ENCODE measurements at regions of chr14 and their contacts with region 1.

Region 1: DNA sequence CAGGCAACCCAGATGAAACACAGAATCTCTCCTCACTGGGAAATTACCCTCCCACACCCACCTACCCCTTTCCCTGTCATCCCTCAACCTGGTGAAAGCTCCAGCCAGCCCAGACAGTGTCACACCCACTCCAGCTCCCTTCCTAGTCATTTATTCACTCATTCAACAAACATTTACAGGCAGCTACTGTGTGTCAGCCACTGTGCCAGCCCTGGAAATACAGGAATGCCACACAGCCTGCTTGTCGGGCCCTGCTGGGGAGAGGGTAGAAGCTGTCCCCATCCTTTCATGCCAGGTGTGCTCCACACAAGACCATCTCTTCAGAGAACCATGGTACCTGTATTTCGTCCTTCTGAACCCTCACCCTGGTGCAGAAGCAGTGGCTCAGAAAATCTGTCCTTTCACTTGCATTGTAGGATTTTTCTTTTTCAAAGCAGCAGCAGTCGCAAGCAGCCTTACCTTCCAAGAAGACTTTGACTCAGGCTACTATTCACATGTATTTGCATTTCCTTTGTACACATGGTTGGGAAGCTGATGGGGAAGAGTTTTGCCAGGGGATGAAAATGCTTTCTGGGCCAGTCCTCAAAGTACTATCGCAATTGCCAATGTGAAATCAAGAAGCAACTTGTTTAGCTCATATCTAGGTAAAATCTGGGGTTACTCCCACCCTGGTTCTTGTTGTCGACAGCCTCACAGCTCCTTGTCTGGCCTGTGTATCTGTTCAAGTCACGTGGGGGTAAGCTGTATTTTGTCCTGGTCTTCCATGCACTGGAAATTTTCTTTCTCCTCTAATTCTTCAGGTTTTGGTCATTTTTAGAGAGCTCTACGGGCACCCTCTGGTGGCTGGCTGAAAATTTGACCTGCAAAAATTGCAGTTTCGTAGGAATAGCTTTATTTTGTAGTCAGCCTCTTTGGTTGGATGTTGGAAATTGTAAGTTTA is 147.4 kb upstream of the EGLN3 start:
- DNase-seq: peak; percentile 36
- ATAC-seq: peak; percentile 59
- H3K4me3 ChIP-seq: no peak overlapping the region
- H3K27ac ChIP-seq: no peak overlapping the region
- H3K4me1 ChIP-seq: no peaks in the 10 kb centered on the region
- H3K27me3 ChIP-seq: no peaks in the 10 kb centered on the region
- CTCF ChIP-seq: peak; percentile 57 to 74 (median 63); a peak in 5 of 6 replicates
- EP300 ChIP-seq: no peak
- POLR2A ChIP-seq: no peak
- RAD21 ChIP-seq: peak; percentile 92

Region 2: DNA sequence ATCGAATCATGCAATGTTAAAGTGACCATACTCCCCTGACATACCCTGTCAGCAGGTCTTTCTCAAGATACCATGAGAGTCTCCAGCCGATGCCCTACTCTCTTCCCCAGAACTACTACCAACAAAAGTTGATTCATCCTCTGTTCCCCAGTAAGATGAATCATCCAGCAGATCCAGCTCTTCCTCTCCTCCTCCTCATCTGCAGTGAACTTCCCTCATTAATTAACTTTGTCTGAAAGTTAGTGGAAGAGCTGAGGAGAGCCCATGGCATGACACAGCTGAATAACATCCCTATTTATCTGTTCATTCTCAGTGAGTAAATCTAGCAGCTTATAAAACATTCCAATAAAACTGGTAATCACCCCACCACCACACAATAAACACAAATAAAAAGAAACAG is 360.9 kb before region 1 on chr14:
- CTCF ChIA-PET with region 1: no interaction called
- POLR2A ChIA-PET with region 1: no interaction called
- RAD21 ChIA-PET with region 1: no interaction called
- SMC1A ChIA-PET with region 1: no interaction called
- in situ Hi-C with region 1: no loop called
- intact Hi-C with region 1: no loop called
- DNase-seq: no peak
- ATAC-seq: no peak
- H3K4me3 ChIP-seq: no peak overlapping the region
- H3K27ac ChIP-seq: no peak overlapping the region
- H3K4me1 ChIP-seq: no peaks in the 10 kb centered on the region
- H3K27me3 ChIP-seq: no peaks in the 10 kb centered on the region
- CTCF ChIP-seq: no peak
- EP300 ChIP-seq: no peak
- POLR2A ChIP-seq: no peak
- RAD21 ChIP-seq: no peak

Region 3: GRCh38 chr14:33839193-33840076 is 258.9 kb before region 1 on chr14:
- CTCF ChIA-PET with region 1: interaction called, 809 read pairs
- POLR2A ChIA-PET with region 1: interaction called, 3 read pairs
- RAD21 ChIA-PET with region 1: interaction called, 466 read pairs
- SMC1A ChIA-PET with region 1: interaction called, 668 read pairs
- in situ Hi-C with region 1: loop called (anchors 5 kb)
- intact Hi-C with region 1: loop called (anchors 1 kb)
- DNase-seq: no peak
- ATAC-seq: peak; percentile 84
- H3K4me3 ChIP-seq: no peak overlapping the region
- H3K27ac ChIP-seq: no peak overlapping the region
- H3K4me1 ChIP-seq: no peaks in the 10 kb centered on the region
- H3K27me3 ChIP-seq: peaks cover 0 to 3% of the 10 kb centered on the region in 2 experiments; a peak in 1 of 4 replicates
- CTCF ChIP-seq: peak; percentile 73 to 85 (median 77)
- EP300 ChIP-seq: no peak
- POLR2A ChIP-seq: no peak
- RAD21 ChIP-seq: peak; percentile 79

Region 4: DNA sequence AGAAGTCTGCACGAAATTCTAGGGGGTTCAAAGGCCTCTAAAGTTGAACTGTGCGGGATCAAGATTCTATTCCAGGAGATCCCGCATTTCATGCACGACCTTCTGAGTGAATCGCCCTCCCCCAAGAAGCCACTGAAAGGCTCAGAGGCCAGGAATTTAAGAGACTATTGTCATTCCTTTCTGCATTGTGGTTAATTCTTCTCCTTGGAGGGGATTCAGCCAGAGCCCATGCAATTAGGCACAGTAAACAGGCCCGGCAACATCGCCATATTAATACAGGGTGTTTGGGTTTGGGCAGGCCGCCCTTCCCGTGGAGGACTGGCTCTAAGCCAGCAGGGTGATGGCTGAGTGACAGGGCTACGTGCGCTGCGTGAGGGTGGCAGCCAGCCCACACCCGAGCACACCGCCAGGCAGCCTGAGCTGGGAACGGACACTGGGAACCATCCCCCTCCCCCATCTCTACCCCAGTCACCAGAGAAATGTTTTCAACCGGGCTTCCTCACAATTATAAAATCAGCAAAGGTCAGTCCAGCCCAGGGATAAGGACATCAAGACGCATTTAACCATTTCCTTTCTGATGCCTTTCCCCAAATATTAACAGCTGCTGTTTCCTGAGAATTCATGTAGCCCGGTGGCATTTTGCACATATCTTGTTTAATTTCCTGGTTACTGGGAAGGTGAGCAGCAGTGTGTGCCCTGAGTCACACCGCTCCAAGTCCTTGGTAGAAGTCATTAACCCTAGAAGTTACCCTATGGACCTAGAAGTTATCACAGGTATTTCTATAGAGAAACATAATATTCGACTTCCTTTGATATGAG is 160.0 kb before region 1 on chr14:
- CTCF ChIA-PET with region 1: interaction called, 176 read pairs
- POLR2A ChIA-PET with region 1: interaction called, 3 read pairs
- RAD21 ChIA-PET with region 1: interaction called, 168 read pairs
- SMC1A ChIA-PET with region 1: interaction called, 184 read pairs
- in situ Hi-C with region 1: no loop called
- intact Hi-C with region 1: no loop called
- DNase-seq: peak; percentile 36
- ATAC-seq: no peak
- H3K4me3 ChIP-seq: no peak overlapping the region; the same call in 1 of the 2 replicates
- H3K27ac ChIP-seq: no peak overlapping the region
- H3K4me1 ChIP-seq: no peaks in the 10 kb centered on the region
- H3K27me3 ChIP-seq: no peaks in the 10 kb centered on the region
- CTCF ChIP-seq: no peak
- EP300 ChIP-seq: no peak
- POLR2A ChIP-seq: no peak
- RAD21 ChIP-seq: no peak

Region 5: GRCh38 chr14:33979613-33980276 is 118.6 kb before region 1 on chr14:
- CTCF ChIA-PET with region 1: interaction called, 12 read pairs
- POLR2A ChIA-PET with region 1: interaction called, 5 read pairs
- RAD21 ChIA-PET with region 1: interaction called, 9 read pairs
- SMC1A ChIA-PET with region 1: interaction called, 10 read pairs
- in situ Hi-C with region 1: no loop called
- intact Hi-C with region 1: no loop called
- DNase-seq: peak; percentile 43
- ATAC-seq: peak; percentile 78
- H3K4me3 ChIP-seq: no peak overlapping the region
- H3K27ac ChIP-seq: no peak overlapping the region
- H3K4me1 ChIP-seq: no peaks in the 10 kb centered on the region
- H3K27me3 ChIP-seq: no peaks in the 10 kb centered on the region
- CTCF ChIP-seq: no peak
- EP300 ChIP-seq: peak; percentile 39 to 68; a peak in 2 of 4 replicates
- POLR2A ChIP-seq: no peak
- RAD21 ChIP-seq: no peak

Region 6: GRCh38 chr14:34030864-34031263 is 67.5 kb before region 1 on chr14:
- CTCF ChIA-PET with region 1: interaction called, 23 read pairs
- POLR2A ChIA-PET with region 1: no interaction called
- RAD21 ChIA-PET with region 1: interaction called, 5 read pairs
- SMC1A ChIA-PET with region 1: interaction called, 5 read pairs
- in situ Hi-C with region 1: no loop called
- intact Hi-C with region 1: no loop called
- DNase-seq: no peak
- ATAC-seq: no peak
- H3K4me3 ChIP-seq: no peak overlapping the region
- H3K27ac ChIP-seq: no peak overlapping the region
- H3K4me1 ChIP-seq: no peaks in the 10 kb centered on the region
- H3K27me3 ChIP-seq: no peaks in the 10 kb centered on the region
- CTCF ChIP-seq: no peak
- EP300 ChIP-seq: no peak
- POLR2A ChIP-seq: no peak
- RAD21 ChIP-seq: no peak

Region 7: GRCh38 chr14:34081576-34082136 is 16.7 kb before region 1 on chr14:
- CTCF ChIA-PET with region 1: interaction called, 35 read pairs
- POLR2A ChIA-PET with region 1: interaction called, 3 read pairs
- RAD21 ChIA-PET with region 1: interaction called, 35 read pairs
- SMC1A ChIA-PET with region 1: interaction called, 58 read pairs
- in situ Hi-C with region 1: no loop called
- intact Hi-C with region 1: no loop called
- DNase-seq: no peak
- ATAC-seq: no peak; the same call in 2 of the 3 replicates
- H3K4me3 ChIP-seq: no peak overlapping the region
- H3K27ac ChIP-seq: no peak overlapping the region
- H3K4me1 ChIP-seq: peaks cover 10% of the 10 kb centered on the region
- H3K27me3 ChIP-seq: no peaks in the 10 kb centered on the region
- CTCF ChIP-seq: no peak
- EP300 ChIP-seq: no peak
- POLR2A ChIP-seq: no peak
- RAD21 ChIP-seq: no peak

Region 8: DNA sequence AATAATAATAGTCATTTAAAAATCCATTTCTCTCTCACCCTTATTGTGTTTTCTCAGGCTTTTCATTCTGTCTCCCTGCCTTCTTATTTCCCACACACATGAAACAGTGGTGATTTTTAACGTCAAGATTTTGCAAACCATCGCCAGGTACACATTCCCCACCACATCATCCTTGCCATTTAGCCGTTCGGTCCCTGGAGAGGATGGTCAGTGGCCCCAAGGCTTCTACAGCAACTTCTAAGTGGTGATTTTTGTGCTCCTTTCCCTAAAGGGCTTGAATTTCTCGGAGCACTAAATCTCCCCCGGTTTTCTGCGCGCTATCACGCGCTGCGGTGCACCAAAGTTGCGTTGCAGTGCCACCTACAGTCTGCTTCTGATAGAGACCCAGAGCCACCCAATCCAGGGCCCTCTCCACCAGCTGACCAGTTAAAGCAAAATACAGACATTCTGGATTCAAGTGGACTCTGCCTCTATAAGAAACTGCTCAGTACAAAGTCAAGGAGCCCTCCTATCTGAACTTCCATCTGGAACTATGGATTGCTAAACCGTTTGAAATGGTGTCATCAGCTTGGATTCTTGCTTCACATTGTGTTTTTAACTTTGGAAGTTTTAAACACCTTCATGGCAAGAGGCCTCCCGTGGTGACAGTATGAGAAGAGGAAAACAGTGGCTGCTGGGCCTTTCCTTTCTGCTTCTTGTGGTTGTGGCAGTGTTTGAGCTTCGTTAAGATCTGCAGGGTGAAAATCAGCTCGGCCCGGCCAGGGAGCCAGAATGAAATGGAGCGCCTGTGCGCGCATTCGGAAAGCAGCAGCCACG is 129.7 kb after region 1 on chr14:
- CTCF ChIA-PET with region 1: interaction called, 101 read pairs
- POLR2A ChIA-PET with region 1: interaction called, 4 read pairs
- RAD21 ChIA-PET with region 1: interaction called, 62 read pairs
- SMC1A ChIA-PET with region 1: interaction called, 139 read pairs
- in situ Hi-C with region 1: no loop called
- intact Hi-C with region 1: loop called (anchors 2 kb)
- DNase-seq: no peak
- ATAC-seq: peak; percentile 96
- H3K4me3 ChIP-seq: no peak overlapping the region
- H3K27ac ChIP-seq: no peak overlapping the region
- H3K4me1 ChIP-seq: no peaks in the 10 kb centered on the region
- H3K27me3 ChIP-seq: peaks cover 0 to 2% of the 10 kb centered on the region in 2 experiments; a peak in 1 of 4 replicates
- CTCF ChIP-seq: peak; percentile 71 to 78 (median 72); a peak in 5 of 6 replicates
- EP300 ChIP-seq: no peak
- POLR2A ChIP-seq: no peak
- RAD21 ChIP-seq: peak; percentile 81

Measured in GM12878 (cell line).